ENCODE measurements at regions of chr3 and their contacts with region 1.

Region 1: GRCh38 chr3:183285828-183286457 is 32.9 kb downstream of the B3GNT5 start:
- DNase-seq: peak; percentile 97
- ATAC-seq: peak; percentile 93
- H3K4me3 Mint-ChIP-seq: peak overlapping the region; percentile 56
- H3K27ac Mint-ChIP-seq: peak overlapping the region; percentile 98
- H3K4me1 Mint-ChIP-seq: peaks cover 43% of the 10 kb centered on the region
- H3K27me3 Mint-ChIP-seq: no peaks in the 10 kb centered on the region

Region 2: DNA sequence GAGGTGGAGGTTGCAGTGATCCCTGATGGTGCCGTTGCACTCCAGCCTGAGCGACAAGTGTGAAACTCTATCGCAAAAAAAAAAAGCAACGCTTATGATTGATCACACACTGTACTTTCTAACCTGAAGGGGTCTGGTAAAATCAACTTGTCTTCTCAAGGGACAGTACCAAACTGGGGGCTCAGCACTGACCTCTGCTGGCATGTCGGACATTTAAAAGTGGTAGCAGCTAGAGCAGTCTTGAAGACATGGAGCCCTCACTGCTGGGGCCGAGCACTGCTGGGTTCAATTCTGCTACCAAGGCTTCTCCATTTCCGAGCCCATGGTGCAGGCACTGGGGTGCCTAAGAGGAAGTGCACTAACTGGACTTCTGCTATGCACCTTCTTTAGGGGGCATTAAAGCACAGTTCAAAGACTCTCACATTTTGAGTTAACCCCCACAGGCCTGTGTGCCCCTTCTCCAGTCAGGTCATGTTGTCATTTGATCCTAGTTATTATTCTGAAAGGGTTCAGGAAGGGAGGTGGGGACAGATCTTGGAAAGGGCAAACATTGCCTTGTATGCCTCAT is 97.0 kb before region 1 on chr3:
- CTCF ChIA-PET with region 1: interaction called, 15 read pairs
- POLR2A ChIA-PET with region 1: no interaction called
- intact Hi-C with region 1: no loop called
- DNase-seq: peak; percentile 56
- ATAC-seq: peak; percentile 33
- H3K4me3 Mint-ChIP-seq: no peak overlapping the region
- H3K27ac Mint-ChIP-seq: no peak overlapping the region
- H3K4me1 Mint-ChIP-seq: peaks cover 20% of the 10 kb centered on the region
- H3K27me3 Mint-ChIP-seq: no peaks in the 10 kb centered on the region

Region 3: GRCh38 chr3:183252973-183253901 is 32.7 kb before region 1 on chr3 and contains the start of gene B3GNT5:
- CTCF ChIA-PET with region 1: interaction called, 5 read pairs
- POLR2A ChIA-PET with region 1: interaction called, 8 read pairs
- intact Hi-C with region 1: loop called (anchors 1 kb)
- DNase-seq: peak; percentile 76
- ATAC-seq: peak; percentile 56
- H3K4me3 Mint-ChIP-seq: peak within 1 kb of the TSS; percentile 77
- H3K27ac Mint-ChIP-seq: peak within 1 kb of the TSS; percentile 79
- H3K4me1 Mint-ChIP-seq: peaks cover 29% of the 10 kb centered on the region
- H3K27me3 Mint-ChIP-seq: peaks cover 14% of the 10 kb centered on the region
- total RNA-seq, gene B3GNT5: 20.2 to 22.8 TPM

Region 4: DNA sequence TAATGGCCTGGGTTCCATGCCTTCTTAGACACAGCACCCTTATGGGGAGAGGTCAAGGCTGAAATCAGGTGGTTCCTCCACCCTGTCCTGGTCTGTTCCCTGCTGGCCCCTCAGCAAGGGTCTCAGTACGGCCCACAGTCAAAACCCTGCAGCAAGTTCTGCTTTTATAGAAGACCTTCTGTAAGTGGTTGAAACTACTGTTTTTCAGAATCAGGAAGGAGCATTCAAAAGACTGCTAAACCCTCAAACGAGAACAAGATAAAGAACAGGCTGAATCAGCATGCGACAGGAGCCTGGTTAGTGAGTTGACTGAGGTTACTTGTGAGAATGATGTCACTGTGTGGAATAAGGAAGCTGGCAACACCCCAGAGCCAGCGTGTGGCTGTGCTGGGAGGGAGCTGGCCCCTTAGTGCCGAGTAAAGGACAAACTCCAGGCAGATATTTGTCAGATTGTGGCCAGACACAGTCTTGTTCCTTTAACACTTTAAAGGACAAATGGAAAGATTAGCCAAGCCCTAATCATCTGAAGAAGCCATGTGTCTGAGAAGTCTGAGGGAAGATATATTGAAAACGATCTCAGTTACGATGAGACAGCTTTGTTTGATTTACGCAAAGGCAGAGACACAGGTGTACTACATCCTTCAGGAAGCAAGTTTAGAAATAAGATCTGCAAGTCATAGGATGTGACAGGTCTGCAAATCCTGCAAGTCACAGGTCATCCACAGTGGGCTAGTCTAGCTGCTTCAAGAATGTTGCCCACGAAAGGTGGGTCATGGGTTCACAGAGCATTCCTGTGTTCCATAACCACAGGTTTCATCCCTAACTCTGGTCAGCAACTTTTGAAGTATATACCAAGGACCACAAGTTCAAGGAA is 21.1 kb after region 1 on chr3:
- CTCF ChIA-PET with region 1: interaction called, 11 read pairs
- POLR2A ChIA-PET with region 1: interaction called, 4 read pairs
- intact Hi-C with region 1: loop called (anchors 1 kb)
- DNase-seq: peak; percentile 72
- ATAC-seq: peak; percentile 98
- H3K4me3 Mint-ChIP-seq: no peak overlapping the region
- H3K27ac Mint-ChIP-seq: peak overlapping the region; percentile 78
- H3K4me1 Mint-ChIP-seq: peaks cover 29% of the 10 kb centered on the region
- H3K27me3 Mint-ChIP-seq: no peaks in the 10 kb centered on the region

Region 5: GRCh38 chr3:183341917-183342288 is 56.0 kb after region 1 on chr3:
- CTCF ChIA-PET with region 1: no interaction called
- POLR2A ChIA-PET with region 1: no interaction called
- intact Hi-C with region 1: no loop called
- DNase-seq: no peak
- ATAC-seq: no peak
- H3K4me3 Mint-ChIP-seq: no peak overlapping the region
- H3K27ac Mint-ChIP-seq: no peak overlapping the region
- H3K4me1 Mint-ChIP-seq: peaks cover 6% of the 10 kb centered on the region
- H3K27me3 Mint-ChIP-seq: peaks cover 2% of the 10 kb centered on the region

Region 6: DNA sequence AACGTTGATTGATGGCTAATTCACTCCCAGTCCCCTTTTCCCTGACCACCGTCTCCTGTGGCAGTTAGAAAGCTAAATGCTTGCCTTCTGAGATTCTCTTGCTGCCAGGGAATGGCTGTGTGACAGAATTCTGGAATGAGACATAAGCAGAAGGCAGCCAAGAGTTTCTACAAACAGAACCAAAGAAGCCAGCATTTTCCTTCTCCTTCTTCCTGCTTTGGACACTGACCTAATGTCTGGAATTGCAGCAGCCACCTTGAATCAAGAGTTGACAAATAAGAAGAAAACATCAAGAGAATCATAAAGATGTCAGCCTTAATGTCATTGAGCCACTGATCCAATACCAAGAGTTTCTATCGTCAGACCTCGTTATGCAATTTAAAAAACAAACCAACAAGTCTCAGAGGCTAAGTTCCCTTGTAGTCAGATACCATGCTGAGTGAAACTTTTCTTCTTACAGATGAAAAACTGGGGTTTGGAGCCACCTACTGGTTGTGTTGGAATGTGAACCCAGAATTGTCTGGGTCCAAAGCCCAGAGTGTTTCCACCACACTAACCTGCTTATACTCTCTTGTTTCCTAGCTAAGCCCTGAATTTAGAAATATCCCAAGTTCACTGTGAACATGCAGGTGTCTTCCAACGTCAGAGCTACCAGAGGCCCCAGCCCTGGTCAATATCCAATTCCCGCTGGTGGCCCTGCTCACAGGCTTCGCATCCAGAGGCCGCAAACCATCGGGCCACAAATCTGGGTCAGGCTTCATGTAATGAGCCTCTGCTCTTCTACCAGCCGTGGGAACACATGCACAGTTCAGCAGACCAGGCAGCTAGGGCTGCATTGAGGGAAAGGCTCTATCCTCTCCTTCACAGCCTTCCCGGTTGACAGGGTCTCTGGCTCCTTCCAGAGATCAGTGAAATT is 100.0 kb after region 1 on chr3:
- CTCF ChIA-PET with region 1: interaction called, 18 read pairs
- POLR2A ChIA-PET with region 1: no interaction called
- intact Hi-C with region 1: no loop called
- DNase-seq: peak; percentile 74
- ATAC-seq: peak; percentile 80
- H3K4me3 Mint-ChIP-seq: no peak overlapping the region
- H3K27ac Mint-ChIP-seq: no peak overlapping the region
- H3K4me1 Mint-ChIP-seq: peaks cover 14% of the 10 kb centered on the region
- H3K27me3 Mint-ChIP-seq: no peaks in the 10 kb centered on the region

Region 7: DNA sequence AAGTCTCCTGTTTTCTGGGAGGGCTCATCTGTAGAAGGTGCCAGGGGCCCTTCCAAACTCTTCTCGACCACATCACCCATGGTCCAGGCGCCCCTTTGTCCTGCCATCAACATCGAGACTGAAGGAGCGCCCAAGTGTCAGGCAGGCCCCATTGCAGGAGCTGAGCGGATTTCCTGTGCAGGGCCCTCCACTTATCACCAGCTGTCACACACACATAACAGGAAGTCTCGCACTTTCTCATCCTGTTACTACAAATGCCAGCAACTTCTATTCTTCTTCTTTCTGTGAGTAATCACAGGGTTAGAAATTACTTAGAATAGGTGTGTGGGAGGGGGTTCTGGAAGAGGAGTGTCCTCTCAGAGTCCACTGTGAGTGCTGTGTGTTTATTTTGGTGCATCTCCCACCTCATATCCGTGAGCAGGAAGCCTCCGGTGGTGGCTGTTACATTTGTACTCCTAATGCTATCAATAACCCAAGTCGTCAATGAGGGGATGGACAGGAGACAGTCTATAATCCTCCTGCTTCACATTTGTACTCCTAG is 269.7 kb after region 1 on chr3 and contains the start of gene KLHL6:
- CTCF ChIA-PET with region 1: no interaction called
- POLR2A ChIA-PET with region 1: interaction called, 6 read pairs
- intact Hi-C with region 1: loop called (anchors 1 kb)
- DNase-seq: peak; percentile 89
- ATAC-seq: peak; percentile 85
- H3K4me3 Mint-ChIP-seq: peak within 1 kb of the TSS; percentile 97
- H3K27ac Mint-ChIP-seq: peak within 1 kb of the TSS; percentile 100
- H3K4me1 Mint-ChIP-seq: peaks cover 47% of the 10 kb centered on the region
- H3K27me3 Mint-ChIP-seq: no peaks in the 10 kb centered on the region
- total RNA-seq, gene KLHL6: 62.8 to 64.7 TPM

Measured in activated CD4-positive, alpha-beta T cell treated with anti-CD3 and anti-CD28 coated beads for 36 hours (primary cell).